ENCODE measurements at regions of chr7 and their contacts with region 1.

Region 1: GRCh38 chr7:150898475-150899011 is 46.2 kb downstream of the AOC1 start:
- DNase-seq: peak; percentile 80 to 90 (median 87)
- ATAC-seq: peak; percentile 50
- H3K4me3 ChIP-seq: no peak overlapping the region
- H3K4me1 ChIP-seq: peaks cover 29% of the 10 kb centered on the region
- CTCF ChIP-seq: peak; percentile 92

Region 2: GRCh38 chr7:150988230-150989226 is 90.0 kb after region 1 on chr7:
- intact Hi-C with region 1: loop called (anchors 5 kb)
- DNase-seq: peak; percentile 56 to 62 (median 61)
- ATAC-seq: peak; percentile 56
- H3K4me3 ChIP-seq: no peak overlapping the region
- H3K4me1 ChIP-seq: peaks cover 7% of the 10 kb centered on the region
- CTCF ChIP-seq: peak; percentile 79

Measured in mucosa of descending colon (tissue), 3 donors.